Lower leg skin (tissue), 4 donors: ENCODE measurements at regions of chr1 and their contacts with region 1.

Region 1: DNA sequence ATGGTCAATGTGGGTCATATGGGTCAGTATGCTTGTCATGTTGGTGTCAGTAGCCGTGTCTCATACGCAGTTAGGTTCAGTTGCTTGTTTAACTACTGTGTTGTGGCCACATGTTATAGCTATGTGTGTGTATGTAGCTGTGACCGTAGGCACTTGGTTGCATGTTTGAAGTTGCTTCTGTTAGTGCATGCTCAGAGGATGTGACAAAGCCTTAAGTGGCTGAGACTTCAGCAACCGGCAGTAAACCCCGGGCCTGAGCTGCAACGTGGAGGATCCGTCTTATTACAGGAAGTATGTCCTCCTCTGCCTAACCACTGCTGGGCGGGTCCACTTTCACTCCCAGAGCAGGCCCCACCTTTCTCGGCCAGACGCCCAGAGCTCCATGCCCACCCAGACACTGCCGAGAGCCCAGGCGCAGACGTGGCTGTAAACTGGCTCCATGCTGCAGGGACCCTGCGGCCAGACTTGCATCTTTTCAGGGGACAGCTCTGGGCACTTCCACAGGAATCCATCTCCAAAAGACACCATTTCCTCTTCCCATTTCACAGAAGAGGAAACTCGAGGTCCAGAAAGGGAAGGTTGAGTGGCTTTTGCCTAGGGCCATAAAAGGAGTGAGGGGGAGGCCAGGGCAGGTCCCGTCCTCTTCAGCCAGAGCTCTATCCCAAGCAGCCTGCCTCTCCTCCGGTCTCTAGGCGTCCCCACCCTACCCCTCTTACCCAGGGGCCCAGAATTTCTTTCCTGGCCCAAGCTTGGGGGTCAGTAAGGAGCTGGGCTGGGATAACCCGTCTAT is 2.1 kb downstream of the TCEA3 start:
- DNase-seq: peak; percentile 72 to 95
- H3K4me3 ChIP-seq: no peak overlapping the region
- CTCF ChIP-seq: no peak
- POLR2A ChIP-seq: no peak

Region 2: GRCh38 chr1:23484253-23485001 is 62.0 kb after region 1 on chr1:
- intact Hi-C with region 1: loop called (anchors 10 kb)
- DNase-seq: peak; percentile 93 to 98
- H3K4me3 ChIP-seq: peak overlapping the region; percentile 74
- CTCF ChIP-seq: no peak
- POLR2A ChIP-seq: no peak

Region 3: DNA sequence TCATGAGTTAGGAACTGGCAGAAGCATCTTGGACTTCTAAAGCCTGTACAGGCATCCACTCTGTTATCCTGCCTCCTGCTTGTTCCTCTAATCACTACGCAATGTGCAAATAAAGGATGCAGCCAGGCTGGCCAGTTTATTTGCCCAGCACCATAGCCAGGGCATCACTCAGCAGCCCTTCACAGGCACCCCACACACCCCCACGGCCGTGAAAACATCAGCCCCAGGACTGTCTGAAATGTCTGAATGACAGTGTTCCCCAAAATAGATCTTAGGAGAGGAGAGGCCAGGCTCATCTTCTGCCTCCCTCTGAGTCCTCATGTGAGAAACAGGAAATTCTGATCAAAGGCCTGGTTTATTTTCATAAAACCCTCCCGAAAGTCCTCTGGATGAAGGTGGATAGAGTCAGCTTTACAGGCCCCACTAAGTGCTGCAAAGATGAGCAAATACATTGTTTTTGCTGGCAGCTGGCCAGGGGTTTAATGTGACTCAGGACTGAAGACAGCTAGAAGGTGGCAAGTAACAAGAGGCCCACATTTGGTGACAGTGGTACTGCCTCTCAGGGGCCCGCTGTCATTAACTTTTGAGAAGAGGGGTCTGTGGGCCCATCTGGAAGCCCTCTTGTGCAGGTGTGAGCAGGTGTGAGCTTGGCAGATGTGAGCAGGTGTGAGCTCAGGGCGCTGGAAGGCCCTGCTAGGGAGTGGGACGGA is 929.6 kb after region 1 on chr1:
- intact Hi-C with region 1: no loop called
- DNase-seq: no peak
- H3K4me3 ChIP-seq: no peak overlapping the region
- CTCF ChIP-seq: no peak
- POLR2A ChIP-seq: no peak